H1 (cell line): ENCODE measurements at regions of chr9 and their contacts with region 1.

Region 1: GRCh38 chr9:114405294-114406034 is 17.7 kb upstream of the AKNA start:
- DNase-seq: peak in 1 of 2 experiments; percentile 82
- H3K4me3 ChIP-seq: no peak overlapping the region
- H3K27ac ChIP-seq: no peak overlapping the region
- H3K4me1 ChIP-seq: peaks cover 0 to 12% (median 6%) of the 10 kb centered on the region in 4 experiments; a peak in 5 of 7 replicates
- H3K27me3 ChIP-seq: no peaks in the 10 kb centered on the region
- CTCF ChIP-seq: peak; percentile 77 to 93 (median 86)
- EP300 ChIP-seq: no peak
- POLR2A ChIP-seq: no peak
- RAD21 ChIP-seq: peak; percentile 97

Region 2: GRCh38 chr9:114238891-114239875 is 166.3 kb before region 1 on chr9:
- CTCF ChIA-PET with region 1: no interaction called
- POLR2A ChIA-PET with region 1: no interaction called
- DNase-seq: no peak
- H3K4me3 ChIP-seq: no peak overlapping the region
- H3K27ac ChIP-seq: no peak overlapping the region
- H3K4me1 ChIP-seq: peaks cover 0 to 4% (median 0%) of the 10 kb centered on the region in 4 experiments; a peak in 2 of 7 replicates
- H3K27me3 ChIP-seq: no peaks in the 10 kb centered on the region; a peak in 2 of 7 replicates
- CTCF ChIP-seq: peak in 2 of 3 experiments; percentile 40 to 52; a peak in 3 of 4 replicates
- EP300 ChIP-seq: no peak
- POLR2A ChIP-seq: no peak
- RAD21 ChIP-seq: peak; percentile 52 to 57

Region 3: DNA sequence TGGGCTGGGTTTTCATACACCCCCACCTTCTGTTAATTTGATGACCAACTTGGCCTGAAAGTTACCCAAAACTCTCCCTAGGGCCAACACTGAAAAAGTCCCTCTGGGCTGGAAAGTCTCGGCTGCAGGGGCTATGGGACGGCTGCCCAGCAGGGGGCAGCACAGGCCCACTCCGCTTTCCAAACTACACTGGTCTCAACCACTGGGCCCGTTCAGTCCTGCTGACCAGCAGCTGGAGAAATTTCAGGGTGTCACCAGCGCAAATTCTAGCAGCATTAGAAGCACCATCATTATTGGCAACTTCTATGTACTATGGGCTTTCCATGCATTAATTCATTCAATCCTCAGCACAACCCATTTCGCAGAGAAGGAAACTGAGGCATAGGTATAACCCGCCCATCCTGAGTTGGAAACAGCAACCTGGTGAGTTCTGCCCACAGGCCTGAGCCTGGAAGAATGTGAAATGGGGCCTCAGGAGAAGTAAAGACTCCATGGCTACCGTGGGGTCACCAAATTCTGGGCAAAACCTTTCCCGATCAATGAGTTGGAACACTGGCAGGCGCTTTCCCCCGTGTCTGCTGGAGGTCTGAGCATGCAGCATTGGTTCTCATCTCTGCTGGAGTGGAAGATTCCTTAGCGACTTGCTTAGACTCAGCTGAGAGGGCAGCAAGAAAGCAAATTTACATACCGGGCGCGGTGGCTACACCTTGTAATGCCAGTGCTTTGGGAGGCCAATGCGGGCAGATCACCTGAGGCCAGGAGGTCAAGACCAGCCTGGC is 66.1 kb before region 1 on chr9:
- CTCF ChIA-PET with region 1: interaction called, 14 read pairs
- POLR2A ChIA-PET with region 1: no interaction called
- DNase-seq: peak; percentile 38 to 85
- H3K4me3 ChIP-seq: no peak overlapping the region
- H3K27ac ChIP-seq: no peak overlapping the region
- H3K4me1 ChIP-seq: no peaks in the 10 kb centered on the region
- H3K27me3 ChIP-seq: no peaks in the 10 kb centered on the region
- CTCF ChIP-seq: peak; percentile 81 to 91 (median 89)
- EP300 ChIP-seq: no peak
- POLR2A ChIP-seq: no peak
- RAD21 ChIP-seq: peak; percentile 84 to 85

Region 4: GRCh38 chr9:114450833-114451706 is 45.6 kb after region 1 on chr9:
- CTCF ChIA-PET with region 1: interaction called, 11 read pairs
- POLR2A ChIA-PET with region 1: interaction called, 3 read pairs
- DNase-seq: no peak
- H3K4me3 ChIP-seq: no peak overlapping the region
- H3K27ac ChIP-seq: no peak overlapping the region
- H3K4me1 ChIP-seq: peaks cover 1 to 6% (median 4%) of the 10 kb centered on the region in 4 experiments; a peak in 3 of 7 replicates
- H3K27me3 ChIP-seq: no peaks in the 10 kb centered on the region
- CTCF ChIP-seq: no peak
- EP300 ChIP-seq: no peak
- POLR2A ChIP-seq: no peak
- RAD21 ChIP-seq: no peak

Region 5: DNA sequence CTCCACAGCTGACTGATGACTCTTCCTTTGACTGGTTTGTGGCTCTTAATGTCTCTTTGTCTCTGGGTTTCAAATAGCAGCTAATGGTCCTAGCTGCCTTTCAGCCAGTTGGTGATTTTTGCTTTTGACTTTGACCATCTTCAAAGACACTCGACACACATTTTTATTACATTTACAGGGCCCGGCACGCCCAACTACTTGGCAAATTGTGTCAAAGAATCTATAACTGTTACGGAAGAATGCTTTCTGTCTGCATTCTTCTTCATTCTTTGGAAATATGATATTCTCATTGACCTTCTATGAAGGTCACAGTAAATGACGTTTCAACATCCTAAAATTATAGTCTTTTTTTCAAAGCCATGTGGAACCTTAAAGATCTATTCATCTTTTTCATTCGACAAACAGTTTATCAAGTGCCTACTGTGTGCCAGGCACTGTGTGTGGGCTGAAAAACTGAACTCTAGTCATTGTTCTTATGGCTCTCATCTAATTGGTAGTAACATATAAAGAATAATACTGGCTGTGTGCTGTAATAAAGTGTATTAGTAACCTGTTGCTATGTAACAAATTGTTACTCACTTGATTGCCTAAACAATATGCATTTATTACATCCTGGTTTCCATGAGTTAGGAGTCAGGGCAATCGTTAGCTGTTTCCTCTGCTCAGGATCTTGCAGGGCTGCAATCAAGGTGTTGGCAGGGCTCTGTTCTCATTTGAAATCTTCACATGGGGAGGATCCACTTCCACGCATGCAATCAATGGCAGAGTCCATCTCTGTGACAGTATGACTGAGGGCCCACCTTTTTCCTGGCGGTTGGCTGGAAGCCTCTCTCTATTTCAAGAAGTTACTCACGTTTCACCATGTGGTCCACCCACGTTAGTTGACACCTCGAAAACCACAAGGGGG is 106.8 kb after region 1 on chr9:
- CTCF ChIA-PET with region 1: interaction called, 13 read pairs
- POLR2A ChIA-PET with region 1: no interaction called
- DNase-seq: no peak
- H3K4me3 ChIP-seq: no peak overlapping the region
- H3K27ac ChIP-seq: no peak overlapping the region
- H3K4me1 ChIP-seq: peaks cover 0 to 10% (median 3%) of the 10 kb centered on the region in 4 experiments; a peak in 5 of 7 replicates
- H3K27me3 ChIP-seq: no peaks in the 10 kb centered on the region; a peak in 2 of 7 replicates
- CTCF ChIP-seq: no peak
- EP300 ChIP-seq: no peak
- POLR2A ChIP-seq: no peak
- RAD21 ChIP-seq: no peak

Region 6: GRCh38 chr9:114662081-114662989 is 256.9 kb after region 1 on chr9:
- CTCF ChIA-PET with region 1: interaction called, 116 read pairs
- POLR2A ChIA-PET with region 1: no interaction called
- DNase-seq: peak in 1 of 2 experiments; percentile 89
- H3K4me3 ChIP-seq: no peak overlapping the region
- H3K27ac ChIP-seq: no peak overlapping the region
- H3K4me1 ChIP-seq: peaks cover 0 to 11% (median 6%) of the 10 kb centered on the region in 4 experiments; a peak in 4 of 7 replicates
- H3K27me3 ChIP-seq: no peaks in the 10 kb centered on the region
- CTCF ChIP-seq: peak; percentile 70 to 90 (median 90)
- EP300 ChIP-seq: no peak
- POLR2A ChIP-seq: no peak
- RAD21 ChIP-seq: peak; percentile 81 to 87

Region 7: DNA sequence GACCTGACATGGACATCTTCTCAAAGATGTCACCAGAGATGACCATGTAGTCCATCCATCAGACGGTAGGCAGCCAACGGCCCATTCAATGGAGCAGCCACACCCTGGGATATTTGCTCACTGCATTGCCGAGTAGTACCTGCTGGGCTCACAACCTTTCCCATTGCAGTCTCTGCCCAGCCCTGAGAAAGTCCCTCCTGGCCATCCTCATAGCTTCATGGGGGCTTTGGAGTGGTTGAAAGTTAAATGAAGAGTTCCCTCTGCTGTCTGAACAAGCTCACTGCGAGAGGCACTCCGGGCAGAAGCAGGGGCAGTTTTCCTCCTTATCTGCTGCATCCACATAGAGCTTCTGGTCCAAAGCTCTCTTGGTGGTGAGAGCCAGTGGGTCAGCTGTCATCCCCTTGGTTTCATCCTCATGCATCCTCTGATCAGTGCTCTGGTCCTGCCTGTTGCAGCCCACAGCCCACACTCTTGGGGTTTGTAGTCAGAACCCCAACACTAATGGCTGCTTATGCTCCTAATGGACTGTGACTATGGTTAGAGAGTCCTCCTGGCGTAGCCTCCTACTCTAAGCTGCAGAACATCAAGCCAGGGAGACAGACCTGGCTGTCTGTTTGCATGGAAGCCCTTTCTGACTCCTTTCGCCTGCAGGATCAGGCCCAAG is 501.6 kb after region 1 on chr9:
- CTCF ChIA-PET with region 1: interaction called, 10 read pairs
- POLR2A ChIA-PET with region 1: no interaction called
- DNase-seq: peak; percentile 54 to 63
- H3K4me3 ChIP-seq: no peak overlapping the region
- H3K27ac ChIP-seq: no peak overlapping the region
- H3K4me1 ChIP-seq: no peaks in the 10 kb centered on the region
- H3K27me3 ChIP-seq: peaks cover 0 to 2% (median 0%) of the 10 kb centered on the region in 4 experiments; a peak in 1 of 7 replicates
- CTCF ChIP-seq: peak; percentile 58 to 96 (median 92)
- EP300 ChIP-seq: peak in 1 of 2 experiments; percentile 13; a peak in 1 of 3 replicates
- POLR2A ChIP-seq: no peak
- RAD21 ChIP-seq: peak; percentile 97 to 99